HEK293 (cell line): ENCODE measurements at regions of chr5 and their contacts with region 1.

Region 1: GRCh38 chr5:141811287-141812155 is 66.7 kb downstream of the PCDH1 start:
- H3K4me3 ChIP-seq: no peak overlapping the region
- H3K27ac ChIP-seq: no peak overlapping the region
- H3K4me1 ChIP-seq: no peaks in the 10 kb centered on the region
- CTCF ChIP-seq: peak; percentile 59

Region 2: GRCh38 chr5:141701360-141702119 is 110.0 kb before region 1 on chr5:
- CTCF ChIA-PET with region 1: interaction called, 76 read pairs
- POLR2A ChIA-PET with region 1: no interaction called
- H3K4me3 ChIP-seq: no peak overlapping the region
- H3K27ac ChIP-seq: no peak overlapping the region
- H3K4me1 ChIP-seq: no peaks in the 10 kb centered on the region; the same call in 1 of the 2 replicates
- CTCF ChIP-seq: no peak

Region 3: GRCh38 chr5:141757402-141757801 is 54.1 kb before region 1 on chr5:
- CTCF ChIA-PET with region 1: interaction called, 14 read pairs
- POLR2A ChIA-PET with region 1: no interaction called
- H3K4me3 ChIP-seq: no peak overlapping the region
- H3K27ac ChIP-seq: no peak overlapping the region
- H3K4me1 ChIP-seq: peaks cover 5% of the 10 kb centered on the region; the same call in 1 of the 2 replicates
- CTCF ChIP-seq: peak; percentile 57

Region 4: DNA sequence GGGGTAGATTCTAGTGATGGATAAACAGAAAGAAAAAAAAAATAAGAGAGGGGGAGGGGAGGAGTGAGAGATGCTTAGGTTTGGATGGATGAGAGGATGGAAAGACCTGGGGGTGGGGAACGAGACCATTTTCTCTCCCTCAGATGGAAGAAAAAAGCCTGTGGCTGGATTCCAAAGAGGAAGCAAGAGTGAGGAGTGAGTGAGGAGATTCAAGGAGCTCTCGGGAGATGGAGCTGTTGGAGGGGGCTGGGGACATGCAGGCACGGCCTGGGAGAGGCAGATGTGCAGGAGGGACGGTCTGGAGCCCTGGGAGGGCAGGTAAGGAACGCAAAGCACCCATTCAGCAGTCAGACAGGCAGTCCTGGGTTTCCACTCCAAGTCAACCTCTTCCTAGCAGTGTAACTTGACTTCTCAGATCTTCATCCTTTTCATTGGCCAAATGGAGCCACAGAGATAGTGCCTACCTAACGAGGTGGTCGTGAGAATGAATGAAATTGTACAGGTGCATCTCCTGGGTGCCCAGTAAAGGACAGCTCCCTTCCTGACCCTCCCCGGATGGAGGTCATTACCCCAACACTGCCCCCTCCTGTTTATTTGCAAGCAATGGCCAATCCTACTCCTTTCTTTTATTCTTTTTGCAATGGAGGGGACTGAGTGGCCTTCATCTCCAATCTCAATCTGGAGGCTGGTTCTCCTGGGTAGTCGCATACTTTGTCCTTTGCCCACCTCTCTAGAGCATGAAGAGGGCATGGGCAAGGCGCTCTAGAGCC is 14.5 kb after region 1 on chr5:
- CTCF ChIA-PET with region 1: interaction called, 58 read pairs
- POLR2A ChIA-PET with region 1: no interaction called
- H3K4me3 ChIP-seq: no peak overlapping the region
- H3K27ac ChIP-seq: no peak overlapping the region
- H3K4me1 ChIP-seq: no peaks in the 10 kb centered on the region
- CTCF ChIP-seq: 0 out of 2 replicates have a peak, but pooled peaks have one; percentile 27